ENCODE measurements at regions of chr2 and their contacts with region 1.

Region 1: DNA sequence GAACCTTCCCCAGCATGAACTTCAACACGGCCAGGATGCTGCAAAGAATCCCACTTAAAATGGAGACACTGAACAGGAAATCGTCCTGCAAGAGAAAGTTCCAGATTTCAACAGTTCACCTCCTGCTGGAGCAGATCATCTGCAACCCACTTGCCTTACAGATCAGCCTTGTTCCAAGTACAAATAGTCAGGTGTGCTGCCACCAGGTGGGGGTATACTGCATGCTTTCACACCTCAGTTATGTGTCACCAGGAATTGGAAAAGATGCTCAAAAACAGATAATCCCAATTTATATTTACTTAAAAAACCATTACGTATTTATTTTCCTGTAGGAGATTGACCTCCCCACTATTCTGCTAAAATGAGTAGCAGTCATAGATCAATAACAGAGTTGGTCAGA is 212.3 kb downstream of the MGAT5 start:
- DNase-seq: peak in 3 of 4 experiments; percentile 33 to 41 (median 38)
- ATAC-seq: peak; percentile 50; the same call in 1 of the 3 replicates
- H3K4me3 ChIP-seq: no peak overlapping the region
- H3K27ac ChIP-seq: no peak overlapping the region
- H3K4me1 ChIP-seq: no peaks in the 10 kb centered on the region
- H3K27me3 ChIP-seq: peaks cover 20 to 71% of the 10 kb centered on the region in 2 experiments
- CTCF ChIP-seq: peak in 2 of 3 experiments; percentile 33 to 35; a peak in 3 of 6 replicates
- EP300 ChIP-seq: no peak
- POLR2A ChIP-seq: no peak
- RAD21 ChIP-seq: peak; percentile 58 to 69

Region 2: DNA sequence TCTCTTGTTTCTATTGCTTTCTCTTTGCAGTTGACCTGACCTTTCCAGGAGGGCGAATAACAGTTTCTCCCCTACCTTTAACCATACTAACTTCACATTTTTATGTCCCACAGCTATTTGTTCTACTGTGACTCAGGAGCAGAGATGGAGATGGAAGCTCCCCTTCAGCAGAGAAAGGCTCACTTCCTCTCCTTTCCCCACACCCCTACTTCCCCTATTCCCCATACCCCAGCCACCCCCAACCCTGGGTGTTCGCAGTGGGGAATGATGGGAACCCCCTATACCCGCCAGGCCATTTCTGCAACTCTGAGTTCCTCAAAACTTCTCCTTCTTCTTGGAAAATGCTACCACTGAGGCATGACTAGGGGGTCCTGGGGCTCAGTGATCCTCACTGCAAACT is 497.7 kb before region 1 on chr2:
- CTCF ChIA-PET with region 1: no interaction called
- POLR2A ChIA-PET with region 1: no interaction called
- in situ Hi-C with region 1: no loop called
- intact Hi-C with region 1: no loop called
- DNase-seq: no peak
- ATAC-seq: no peak
- H3K4me3 ChIP-seq: no peak overlapping the region
- H3K27ac ChIP-seq: no peak overlapping the region
- H3K4me1 ChIP-seq: no peaks in the 10 kb centered on the region
- H3K27me3 ChIP-seq: peaks cover 0 to 5% of the 10 kb centered on the region in 2 experiments; a peak in 3 of 5 replicates
- CTCF ChIP-seq: no peak
- EP300 ChIP-seq: no peak
- POLR2A ChIP-seq: no peak
- RAD21 ChIP-seq: no peak

Region 3: GRCh38 chr2:134454931-134455330 is 11.2 kb before region 1 on chr2:
- CTCF ChIA-PET with region 1: no interaction called
- POLR2A ChIA-PET with region 1: no interaction called
- in situ Hi-C with region 1: no loop called
- intact Hi-C with region 1: no loop called
- DNase-seq: no peak
- ATAC-seq: no peak
- H3K4me3 ChIP-seq: no peak overlapping the region
- H3K27ac ChIP-seq: no peak overlapping the region
- H3K4me1 ChIP-seq: no peaks in the 10 kb centered on the region
- H3K27me3 ChIP-seq: peaks cover 2 to 45% of the 10 kb centered on the region in 2 experiments
- CTCF ChIP-seq: no peak
- EP300 ChIP-seq: no peak
- POLR2A ChIP-seq: no peak
- RAD21 ChIP-seq: no peak

Region 4: DNA sequence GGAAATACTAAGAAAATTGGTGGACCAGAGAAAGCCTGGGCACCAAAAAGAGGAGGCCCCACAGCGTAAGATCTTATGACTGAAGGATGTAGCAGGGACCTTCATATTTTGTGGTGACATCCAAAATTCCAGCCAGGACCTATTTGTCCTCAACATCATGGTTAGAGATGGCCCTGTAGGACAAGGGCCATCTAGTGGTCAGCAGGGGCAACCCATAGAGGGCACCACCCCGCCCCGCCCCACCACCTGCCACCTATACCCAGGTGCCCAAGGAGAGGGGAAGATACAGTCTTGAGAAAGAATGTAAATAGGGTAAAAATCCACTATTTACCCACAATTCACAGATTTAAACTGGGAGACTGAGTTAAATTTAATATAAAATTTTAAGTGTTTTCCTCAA is 312.2 kb after region 1 on chr2:
- CTCF ChIA-PET with region 1: interaction called, 4 read pairs
- POLR2A ChIA-PET with region 1: no interaction called
- in situ Hi-C with region 1: no loop called
- intact Hi-C with region 1: loop called (anchors 2 kb)
- DNase-seq: peak in 3 of 4 experiments; percentile 19 to 30 (median 20)
- ATAC-seq: peak; percentile 89
- H3K4me3 ChIP-seq: no peak overlapping the region
- H3K27ac ChIP-seq: no peak overlapping the region
- H3K4me1 ChIP-seq: peaks cover 0 to 12% of the 10 kb centered on the region in 2 experiments; a peak in 4 of 5 replicates
- H3K27me3 ChIP-seq: no peaks in the 10 kb centered on the region
- CTCF ChIP-seq: peak; percentile 59 to 84 (median 64)
- EP300 ChIP-seq: no peak
- POLR2A ChIP-seq: no peak
- RAD21 ChIP-seq: peak; percentile 54 to 62

Measured in K562 (cell line).